ENCODE measurements at regions of chr12 and their contacts with region 1.

Region 1: GRCh38 chr12:122526683-122527477 is at the starts of genes KNTC1 and RSRC2:
- DNase-seq: peak; percentile 97 to 98
- H3K4me3 ChIP-seq: peak within 1 kb of the TSS; percentile 97
- H3K27ac ChIP-seq: peak within 1 kb of the TSS; percentile 95
- H3K4me1 ChIP-seq: peaks cover 29% of the 10 kb centered on the region
- H3K27me3 ChIP-seq: no peaks in the 10 kb centered on the region
- CTCF ChIP-seq: no peak
- total RNA-seq, gene KNTC1: 63.0 and 67.7 TPM in 2 replicates
- total RNA-seq, gene RSRC2: 61.2 and 64.5 TPM in 2 replicates

Region 2: GRCh38 chr12:122336015-122336946 is 190.6 kb before region 1 on chr12:
- CTCF ChIA-PET with region 1: interaction called, 5 read pairs
- POLR2A ChIA-PET with region 1: interaction called, 10 read pairs
- intact Hi-C with region 1: no loop called
- DNase-seq: peak in 1 of 2 experiments; percentile 29
- H3K4me3 ChIP-seq: no peak overlapping the region
- H3K27ac ChIP-seq: peak overlapping the region; percentile 36
- H3K4me1 ChIP-seq: no peaks in the 10 kb centered on the region
- H3K27me3 ChIP-seq: no peaks in the 10 kb centered on the region
- CTCF ChIP-seq: peak; percentile 87

Region 3: GRCh38 chr12:122399592-122400373 is 127.1 kb before region 1 on chr12:
- CTCF ChIA-PET with region 1: no interaction called
- POLR2A ChIA-PET with region 1: no interaction called
- intact Hi-C with region 1: loop called (anchors 1 kb)
- DNase-seq: peak; percentile 82 to 90
- H3K4me3 ChIP-seq: peak overlapping the region; percentile 46; the same call in 1 of the 2 replicates
- H3K27ac ChIP-seq: peak overlapping the region; percentile 100
- H3K4me1 ChIP-seq: peaks cover 26% of the 10 kb centered on the region
- H3K27me3 ChIP-seq: no peaks in the 10 kb centered on the region
- CTCF ChIP-seq: peak; percentile 80

Region 4: DNA sequence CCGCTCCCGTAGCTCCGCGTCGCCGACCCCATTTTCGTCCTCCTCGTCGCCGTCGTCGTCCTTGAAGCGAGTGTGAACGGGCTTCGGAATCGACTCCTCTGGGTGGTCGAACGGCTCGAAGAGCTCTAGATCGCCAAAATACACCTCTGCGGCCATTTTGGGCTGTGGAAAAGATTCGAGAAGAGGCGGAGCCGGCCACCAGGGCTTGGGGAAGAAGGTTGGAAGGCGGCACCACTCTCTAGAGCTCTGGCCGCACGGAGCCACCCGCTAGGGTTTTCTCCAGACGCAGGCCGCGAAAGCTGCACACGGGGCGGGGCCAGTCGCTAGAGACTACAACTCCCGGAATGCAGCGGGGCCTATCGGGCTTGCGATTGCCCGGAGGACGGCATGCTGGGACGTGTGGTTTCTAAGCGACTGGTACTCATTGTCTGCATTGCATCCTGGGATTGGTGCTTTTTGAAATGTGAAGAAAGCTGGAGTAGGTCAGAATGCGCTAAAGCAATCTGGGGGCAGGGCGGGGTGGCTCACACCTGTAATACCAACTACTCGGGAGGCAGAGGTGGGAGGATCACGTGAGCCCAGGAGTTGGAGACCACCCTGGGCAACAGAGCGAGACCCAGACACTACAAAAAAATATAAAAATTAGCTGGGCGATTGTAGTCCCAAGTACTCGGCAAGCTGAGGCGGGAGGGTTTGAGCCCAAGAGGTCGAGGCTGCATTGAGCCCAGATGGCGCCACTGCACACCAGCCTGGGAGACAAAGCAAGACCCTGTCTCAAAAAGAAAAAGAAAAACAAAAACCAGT is 26.0 kb before region 1 on chr12 and contains the start of gene ZCCHC8:
- CTCF ChIA-PET with region 1: no interaction called
- POLR2A ChIA-PET with region 1: interaction called, 8 read pairs
- intact Hi-C with region 1: loop called (anchors 1 kb)
- DNase-seq: peak; percentile 94 to 95
- H3K4me3 ChIP-seq: peak within 1 kb of the TSS; percentile 86
- H3K27ac ChIP-seq: peak within 1 kb of the TSS; percentile 91
- H3K4me1 ChIP-seq: peaks cover 23% of the 10 kb centered on the region; the same call in 1 of the 2 replicates
- H3K27me3 ChIP-seq: no peaks in the 10 kb centered on the region
- CTCF ChIP-seq: no peak
- total RNA-seq, gene ZCCHC8: 16.7 and 24.3 TPM in 2 replicates

Region 5: DNA sequence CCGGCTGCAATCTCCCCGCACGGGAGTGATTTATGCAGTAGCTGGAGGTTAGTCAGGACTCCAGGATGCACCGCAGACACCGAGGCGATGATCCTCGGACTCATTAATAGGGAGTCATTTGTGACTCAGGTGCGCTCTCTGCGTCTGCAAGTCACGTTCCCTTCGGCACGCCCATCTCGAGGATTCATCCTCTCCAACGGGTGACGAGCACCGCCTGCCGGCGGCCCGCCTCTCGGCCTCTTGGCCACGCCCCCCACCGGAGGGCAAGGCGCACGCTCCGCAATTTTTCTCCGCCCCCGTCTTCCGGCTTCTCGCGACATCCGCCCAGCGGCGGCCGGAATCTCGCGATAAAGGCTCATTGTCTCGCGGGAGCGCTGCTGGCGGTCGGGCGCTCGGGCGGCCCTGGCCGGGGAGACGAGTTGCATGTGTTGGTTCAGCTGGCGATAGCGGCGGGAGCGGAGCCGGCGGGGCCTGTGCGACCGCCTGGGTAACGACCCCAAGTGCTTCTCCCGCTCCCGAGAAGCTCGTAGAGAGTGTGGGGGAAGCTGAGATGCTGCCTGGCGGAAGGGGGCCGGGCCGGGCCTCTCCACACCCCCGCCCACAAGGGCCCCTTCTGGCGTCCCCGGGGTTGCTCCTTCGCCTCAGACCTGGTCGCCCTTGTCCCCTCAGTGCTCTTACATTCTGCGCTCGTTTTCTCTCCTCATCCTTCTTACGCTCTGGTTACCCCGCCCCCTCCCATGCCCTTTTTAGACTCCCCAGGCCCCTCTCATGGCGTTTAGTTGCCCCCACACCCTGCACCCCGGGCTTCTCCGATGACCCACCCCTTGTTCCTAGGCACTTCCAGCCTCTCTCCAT is 225.8 kb after region 1 on chr12 and contains the start of gene DENR:
- CTCF ChIA-PET with region 1: no interaction called
- POLR2A ChIA-PET with region 1: no interaction called
- intact Hi-C with region 1: loop called (anchors 1 kb)
- DNase-seq: peak; percentile 96 to 99
- H3K4me3 ChIP-seq: peak within 1 kb of the TSS; percentile 86
- H3K27ac ChIP-seq: peak within 1 kb of the TSS; percentile 62
- H3K4me1 ChIP-seq: peaks cover 25% of the 10 kb centered on the region
- H3K27me3 ChIP-seq: no peaks in the 10 kb centered on the region
- CTCF ChIP-seq: peak; percentile 70
- total RNA-seq, gene DENR: 53.0 and 66.6 TPM in 2 replicates

Region 6: GRCh38 chr12:122946690-122947341 is 419.9 kb after region 1 on chr12:
- CTCF ChIA-PET with region 1: no interaction called
- POLR2A ChIA-PET with region 1: interaction called, 19 read pairs
- intact Hi-C with region 1: no loop called
- DNase-seq: peak; percentile 87 to 91
- H3K4me3 ChIP-seq: no peak overlapping the region
- H3K27ac ChIP-seq: peak overlapping the region; percentile 58
- H3K4me1 ChIP-seq: peaks cover 62% of the 10 kb centered on the region
- H3K27me3 ChIP-seq: no peaks in the 10 kb centered on the region
- CTCF ChIP-seq: no peak; the same call in 1 of the 2 replicates

Measured in PC-9 (cell line).